ENCODE measurements at regions of chr13 and their contacts with region 1.

Region 1: DNA sequence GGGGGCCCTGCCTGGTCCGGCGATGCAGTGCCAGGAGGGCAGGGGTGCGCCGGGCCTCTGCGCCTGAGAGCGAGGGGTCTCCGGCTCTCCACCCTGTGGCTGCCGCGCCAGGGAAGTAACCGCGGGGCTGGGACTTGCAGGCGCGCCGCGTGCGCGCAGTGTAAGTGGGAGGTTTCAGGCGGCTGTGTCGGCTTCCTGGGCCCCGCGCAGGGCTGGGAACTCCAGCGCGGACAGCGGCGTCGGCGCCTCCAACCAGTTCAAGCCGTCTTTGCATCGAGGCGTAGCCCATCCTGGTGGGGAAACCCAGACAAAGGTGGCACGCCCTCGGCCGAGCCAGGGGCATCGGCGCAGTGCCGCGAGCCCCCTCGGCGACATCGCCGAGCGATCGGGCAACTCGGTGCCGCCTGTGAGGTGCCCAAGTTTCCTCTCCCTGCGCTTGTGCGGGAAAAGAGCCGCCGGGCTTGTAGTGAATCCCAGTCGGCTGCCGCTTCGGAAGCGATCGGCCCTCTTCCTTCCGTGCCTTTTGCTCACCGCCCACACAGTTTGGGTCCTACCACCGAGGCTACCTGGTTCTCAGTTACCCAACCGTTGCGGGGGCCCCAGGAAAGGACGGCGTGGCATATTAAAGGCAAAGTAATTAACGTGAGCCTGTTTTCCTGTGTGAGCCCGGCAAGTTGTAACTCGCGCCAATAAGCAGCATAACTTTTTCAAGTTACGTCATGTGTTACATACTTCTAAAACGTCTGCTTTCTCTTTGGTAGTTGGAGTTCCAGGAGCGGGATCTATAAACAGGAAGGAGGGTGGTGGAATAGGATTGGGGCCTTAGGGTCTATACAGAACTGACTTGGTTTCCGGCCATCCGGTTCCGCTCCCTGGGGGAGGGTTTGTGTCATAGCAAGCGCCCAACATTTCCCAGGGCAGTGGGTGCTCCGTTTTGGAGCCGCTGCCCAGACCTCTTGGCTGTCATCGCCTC is 1.2 kb downstream of the LRCH1 start:
- DNase-seq: peak; percentile 83
- ATAC-seq: peak; percentile 79

Region 2: GRCh38 chr13:46603165-46603603 is 49.0 kb after region 1 on chr13:
- intact Hi-C with region 1: loop called (anchors 5 kb)
- DNase-seq: no peak
- ATAC-seq: peak; percentile 19

Region 3: GRCh38 chr13:46679369-46680120 is 125.4 kb after region 1 on chr13:
- intact Hi-C with region 1: loop called (anchors 10 kb)
- DNase-seq: no peak
- ATAC-seq: peak; percentile 78

Region 4: GRCh38 chr13:46721054-46721453 is 166.9 kb after region 1 on chr13:
- intact Hi-C with region 1: loop called (anchors 2 kb)
- DNase-seq: peak; percentile 36
- ATAC-seq: peak; percentile 58

Measured in left ventricle myocardium superior (tissue), 1 donor.